Aorta (tissue), 5 donors: ENCODE measurements at regions of chr2 and their contacts with region 1.

Region 1: GRCh38 chr2:98805412-98806171 is 74.7 kb upstream of the MGAT4A start:
- DNase-seq: peak in 1 of 2 donors; percentile 62
- ATAC-seq: peak; percentile 40
- H3K4me3 ChIP-seq: no peak overlapping the region
- H3K27ac ChIP-seq: no peak overlapping the region
- H3K4me1 ChIP-seq: peaks cover 2 to 3% of the 10 kb centered on the region in 2 donors
- H3K27me3 ChIP-seq: no peaks in the 10 kb centered on the region

Region 2: GRCh38 chr2:98201576-98201975 is 604.0 kb before region 1 on chr2:
- intact Hi-C with region 1: no loop called
- DNase-seq: no peak
- ATAC-seq: no peak
- H3K4me3 ChIP-seq: no peak overlapping the region
- H3K27ac ChIP-seq: no peak overlapping the region
- H3K4me1 ChIP-seq: no peaks in the 10 kb centered on the region
- H3K27me3 ChIP-seq: no peaks in the 10 kb centered on the region

Region 3: DNA sequence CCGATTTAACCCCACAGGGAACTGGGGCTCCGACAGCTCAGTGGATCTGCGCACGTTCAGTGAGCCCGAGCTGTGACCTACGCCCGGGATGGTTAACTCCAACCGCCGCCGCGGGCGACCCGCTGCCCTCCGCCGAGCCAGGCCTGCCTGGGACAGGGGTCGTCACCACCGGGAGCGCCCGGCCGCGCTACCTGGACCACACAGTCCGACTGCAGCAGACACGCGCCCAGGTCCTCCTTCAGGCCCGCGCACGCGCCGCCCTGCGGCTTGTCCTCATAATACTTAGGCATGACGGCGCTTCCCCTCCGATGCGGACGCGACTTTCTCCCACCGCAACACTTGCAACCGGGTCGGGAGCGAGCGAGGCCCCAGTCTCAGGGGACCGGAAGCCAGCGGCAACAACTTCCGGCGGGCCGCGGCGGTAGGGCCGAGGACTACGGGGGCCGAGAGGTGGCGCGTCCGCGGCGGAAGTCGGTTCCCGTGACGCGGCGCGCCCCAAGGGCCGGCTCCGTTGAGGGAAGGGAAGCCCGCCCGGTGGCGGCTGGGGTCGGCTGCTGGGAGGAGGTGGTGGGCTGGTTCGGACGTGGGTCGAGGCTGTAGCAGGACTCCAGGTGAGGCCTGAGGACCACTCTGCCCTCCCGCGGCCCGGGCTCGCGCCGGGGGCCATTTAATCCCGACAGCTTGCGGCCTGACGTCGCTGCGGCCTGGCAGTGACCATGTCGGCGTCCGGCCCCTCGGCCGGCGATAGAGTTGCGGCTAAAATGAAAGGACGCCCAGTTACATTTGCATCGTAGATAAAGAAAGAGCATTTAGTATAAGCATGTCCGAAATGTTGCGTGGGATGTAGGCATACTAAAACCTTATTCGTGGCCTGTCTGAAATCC is 197.2 kb before region 1 on chr2 and contains the starts of genes COA5 and UNC50:
- intact Hi-C with region 1: no loop called
- DNase-seq: peak; percentile 96 to 97
- ATAC-seq: peak; percentile 99
- H3K4me3 ChIP-seq: peak within 1 kb of the TSS; percentile 84 to 98
- H3K27ac ChIP-seq: peak within 1 kb of the TSS; percentile 73 to 98
- H3K4me1 ChIP-seq: peaks cover 0 to 17% of the 10 kb centered on the region in 2 donors
- H3K27me3 ChIP-seq: no peaks in the 10 kb centered on the region
- total RNA-seq, gene COA5: 18.1 to 31.1 TPM
- total RNA-seq, gene UNC50: 33.7 to 39.6 TPM

Region 4: DNA sequence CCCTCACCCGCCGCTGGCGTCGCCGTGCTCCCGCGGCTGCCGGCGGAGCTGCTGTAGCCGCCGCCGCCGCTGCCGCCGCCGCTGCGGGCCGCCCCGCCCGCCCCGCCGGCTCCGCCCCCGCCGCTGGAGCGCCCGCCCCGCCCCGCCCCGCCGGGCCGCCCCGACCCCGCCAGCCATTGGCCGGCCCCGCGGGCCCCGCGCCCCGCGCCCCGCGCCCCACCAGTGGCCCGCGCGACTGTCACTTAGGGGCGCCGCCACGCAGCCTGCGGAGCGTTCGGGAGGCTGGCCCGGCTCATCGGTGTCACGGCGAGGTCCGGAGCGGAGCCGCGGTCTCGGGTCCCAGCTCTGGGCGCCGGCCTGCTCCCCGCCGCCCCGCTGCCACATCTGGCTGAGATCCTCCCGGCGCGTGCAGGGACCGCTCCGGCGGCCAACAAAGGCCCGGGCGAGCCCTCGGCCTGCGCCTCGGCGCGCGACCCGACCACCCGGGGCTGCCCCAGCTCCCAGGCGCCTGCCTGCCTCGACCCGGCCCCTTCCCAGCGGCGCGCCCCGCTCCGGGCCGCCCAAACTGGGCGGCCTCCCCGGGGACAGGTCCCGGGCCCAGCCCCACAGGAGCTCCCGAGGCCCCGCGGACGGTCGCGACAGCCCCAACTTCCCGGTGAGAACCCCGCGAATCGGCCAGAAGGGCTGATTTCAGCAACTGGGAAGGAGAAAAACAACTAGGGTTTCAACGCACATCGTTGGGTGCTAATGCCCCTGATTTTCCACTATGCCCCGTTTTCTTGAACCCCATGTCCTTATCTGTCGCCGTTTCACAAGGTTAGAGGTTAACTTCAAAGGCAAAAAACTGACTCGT is 74.3 kb before region 1 on chr2 and contains the start of gene MGAT4A:
- intact Hi-C with region 1: loop called in 1 of 2 experiments (anchors 1 kb)
- DNase-seq: peak; percentile 87 to 91
- ATAC-seq: peak; percentile 92
- H3K4me3 ChIP-seq: peak within 1 kb of the TSS; percentile 96 to 99
- H3K27ac ChIP-seq: peak within 1 kb of the TSS in 1 of 2 donors; percentile 49
- H3K4me1 ChIP-seq: no peaks in the 10 kb centered on the region
- H3K27me3 ChIP-seq: no peaks in the 10 kb centered on the region
- total RNA-seq, gene MGAT4A: 41.0 to 65.8 TPM

Region 5: GRCh38 chr2:98768384-98769113 is 37.0 kb before region 1 on chr2:
- intact Hi-C with region 1: loop called in 1 of 2 experiments (anchors 5 kb)
- DNase-seq: peak in 1 of 2 donors; percentile 62
- ATAC-seq: no peak
- H3K4me3 ChIP-seq: no peak overlapping the region
- H3K27ac ChIP-seq: no peak overlapping the region
- H3K4me1 ChIP-seq: no peaks in the 10 kb centered on the region
- H3K27me3 ChIP-seq: no peaks in the 10 kb centered on the region

Region 6: DNA sequence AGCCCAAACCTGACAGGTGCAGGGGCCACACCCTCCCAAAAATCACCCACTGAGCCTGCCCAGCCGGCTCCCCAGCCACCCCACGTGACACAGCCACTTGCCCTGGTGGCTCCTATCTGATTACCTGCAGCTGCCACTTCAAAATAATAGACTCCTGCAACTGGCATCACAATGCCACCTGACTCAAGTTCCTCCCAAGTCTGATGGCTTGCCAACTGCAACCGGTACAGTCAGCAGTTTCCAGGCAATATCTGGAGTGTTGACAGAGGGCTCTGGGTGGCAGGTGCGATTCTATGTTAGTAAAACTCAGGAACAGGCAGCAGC is 64.3 kb after region 1 on chr2:
- intact Hi-C with region 1: no loop called
- DNase-seq: no peak
- ATAC-seq: no peak
- H3K4me3 ChIP-seq: no peak overlapping the region
- H3K27ac ChIP-seq: no peak overlapping the region
- H3K4me1 ChIP-seq: no peaks in the 10 kb centered on the region
- H3K27me3 ChIP-seq: no peaks in the 10 kb centered on the region